GM18951 (cell line): ENCODE measurements at regions of chr3 and their contacts with region 1.

Region 1: DNA sequence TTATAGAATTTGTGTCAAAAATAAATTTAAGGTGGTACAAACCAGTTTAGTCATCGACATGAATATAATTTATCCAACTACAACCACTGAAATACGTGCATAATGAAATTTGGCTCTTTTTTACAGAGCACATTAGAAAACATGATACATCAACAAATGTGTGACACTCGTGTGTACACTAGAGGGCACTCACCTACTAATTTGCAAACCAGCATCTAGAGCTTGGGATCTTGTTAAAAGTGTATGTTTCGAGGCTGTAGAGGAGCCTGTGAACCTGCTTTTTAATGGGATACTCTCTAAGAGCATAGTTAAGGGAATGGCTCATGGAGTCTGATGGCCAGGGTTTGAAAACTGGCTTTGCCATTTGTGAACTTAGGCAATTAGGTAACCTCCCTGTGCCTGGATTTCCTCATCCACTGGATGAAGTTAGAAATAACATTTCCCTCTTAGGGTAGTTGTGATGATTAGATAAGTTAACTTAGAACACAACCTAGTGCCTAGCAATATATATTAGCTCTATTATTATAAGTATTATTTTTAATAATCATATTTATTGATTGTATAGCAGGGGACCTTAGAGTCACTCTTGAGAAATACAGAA is 8.8 kb upstream of the CPOX start:
- POLR2A ChIP-seq: no peak

Region 2: DNA sequence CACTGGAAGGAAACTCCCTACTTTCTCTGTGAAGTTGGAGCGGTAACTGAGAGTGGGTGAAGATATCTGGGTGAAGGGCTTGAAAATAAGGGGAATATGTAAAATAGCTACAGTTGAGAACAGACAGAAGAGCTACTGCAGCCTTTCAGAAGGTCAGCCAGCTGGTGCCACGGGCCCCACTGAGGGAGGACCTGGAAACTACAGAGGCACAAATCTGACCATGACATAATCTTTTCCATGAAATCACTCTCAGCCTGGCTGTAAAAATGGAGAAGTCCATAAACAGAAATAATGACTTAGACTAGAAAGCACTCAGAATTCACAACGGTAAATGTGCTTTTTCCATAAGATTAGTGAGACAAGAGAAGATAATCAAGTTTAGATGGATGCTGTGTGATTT is 207.4 kb after region 1 on chr3:
- in situ Hi-C with region 1: loop called (anchors 5 kb)
- POLR2A ChIP-seq: no peak

Region 3: DNA sequence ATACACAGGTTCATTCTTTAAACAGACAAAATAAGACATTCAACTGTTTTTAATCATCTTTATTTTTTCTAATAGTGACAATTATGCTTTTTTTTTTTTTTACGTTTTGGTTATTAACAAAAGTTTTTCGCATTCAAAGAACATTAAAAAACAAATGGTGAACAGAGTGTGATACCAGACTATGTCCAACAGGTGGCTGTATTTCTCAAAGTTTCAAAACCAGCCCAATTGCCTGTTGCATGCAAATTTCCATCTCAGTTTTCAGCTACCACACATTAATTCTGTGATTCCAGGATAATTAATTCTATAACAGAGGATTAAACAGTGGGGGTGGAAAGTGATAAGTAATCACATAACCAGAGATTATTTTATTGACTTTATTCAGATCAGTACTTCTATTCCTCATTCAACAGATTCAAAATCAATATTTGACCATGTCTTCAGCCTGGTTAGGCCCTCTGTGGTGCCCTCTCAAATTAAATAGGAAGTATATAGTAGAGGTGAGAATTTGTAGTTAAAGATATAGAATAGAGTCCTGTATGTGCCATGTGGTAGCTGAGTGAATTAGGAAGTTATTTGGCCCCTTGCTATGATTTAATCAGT is 421.5 kb after region 1 on chr3:
- in situ Hi-C with region 1: loop called (anchors 25 kb)
- POLR2A ChIP-seq: no peak

Region 4: DNA sequence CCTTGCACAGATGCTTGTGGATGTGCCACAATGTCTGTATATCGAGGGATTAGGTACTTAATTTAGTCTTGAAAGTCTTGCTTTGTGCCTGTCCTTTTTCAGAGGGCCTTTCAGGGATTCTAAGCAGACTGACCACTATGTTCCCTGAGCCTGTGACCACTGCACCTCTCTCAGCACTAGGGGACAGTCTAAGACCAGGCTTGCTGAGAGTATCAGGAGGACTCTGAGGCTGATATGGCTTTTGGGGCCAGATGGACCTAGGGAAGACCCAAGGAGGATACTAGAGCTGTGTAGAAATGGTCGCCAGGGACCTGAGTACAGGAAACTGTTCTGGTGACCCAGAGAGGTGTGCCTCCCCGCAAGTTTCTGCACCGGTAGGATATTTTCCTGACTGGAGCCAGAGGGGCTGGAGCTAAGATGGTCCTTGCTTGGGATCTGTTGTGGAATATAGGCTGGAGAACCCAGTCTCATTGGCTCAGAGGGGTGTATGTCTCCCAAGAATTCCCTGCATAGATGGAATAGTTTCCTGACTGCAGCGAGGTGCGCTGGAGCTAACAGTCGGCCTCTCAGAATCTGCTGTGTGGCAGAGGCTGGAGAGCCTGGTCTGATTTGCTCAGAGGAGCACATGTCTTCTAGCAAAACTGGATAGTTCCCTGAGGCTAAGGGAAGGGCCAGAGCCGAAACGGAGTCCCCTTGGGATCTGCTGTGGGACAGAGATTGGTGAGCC is 512.5 kb after region 1 on chr3:
- in situ Hi-C with region 1: no loop called
- POLR2A ChIP-seq: no peak